Activated CD8-positive, alpha-beta T cell treated with anti-CD3 and anti-CD28 coated beads for 36 hours (primary cell): ENCODE measurements at regions of chr6 and their contacts with region 1.

Region 1: GRCh38 chr6:39166189-39166911 is 51.4 kb upstream of the SAYSD1 start:
- DNase-seq: peak; percentile 90
- ATAC-seq: peak; percentile 97
- H3K4me3 Mint-ChIP-seq: no peak overlapping the region
- H3K27ac Mint-ChIP-seq: no peak overlapping the region
- H3K4me1 Mint-ChIP-seq: peaks cover 8% of the 10 kb centered on the region
- H3K27me3 Mint-ChIP-seq: no peaks in the 10 kb centered on the region
- CTCF ChIP-seq: peak; percentile 91

Region 2: DNA sequence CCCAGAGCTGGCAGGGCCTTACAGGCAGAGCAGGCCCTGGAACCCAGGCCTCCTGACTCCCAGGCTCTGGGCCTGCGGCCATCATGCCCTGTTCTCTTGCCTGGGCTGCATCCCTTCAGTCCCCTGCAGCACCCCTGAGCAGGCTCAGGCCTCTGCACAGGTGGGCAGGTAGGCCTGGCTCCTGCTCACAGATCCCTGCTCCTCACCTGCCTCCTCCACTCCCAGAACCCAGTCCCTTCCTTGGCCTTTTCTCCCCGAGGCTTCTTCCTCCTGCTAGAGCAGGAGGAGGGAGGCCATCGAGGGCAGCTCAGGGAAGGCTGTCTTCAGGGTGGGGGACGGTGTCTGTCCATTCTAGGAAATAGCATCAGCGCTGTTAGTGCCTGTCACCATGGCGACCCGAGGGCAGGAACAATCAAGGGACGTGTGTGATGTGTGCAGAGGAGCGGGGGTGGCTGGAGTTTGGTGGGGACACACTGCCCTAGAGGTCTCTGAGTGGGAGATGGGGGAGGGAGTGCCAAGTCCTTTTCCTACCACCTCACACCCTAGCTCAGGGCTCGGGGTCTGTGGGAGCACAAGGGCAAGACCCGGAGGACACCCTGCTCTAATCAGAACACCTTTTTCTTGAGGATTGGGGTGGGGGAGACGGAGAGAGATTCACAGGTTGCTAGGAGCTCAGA is 91.2 kb before region 1 on chr6:
- CTCF ChIA-PET with region 1: no interaction called
- POLR2A ChIA-PET with region 1: no interaction called
- intact Hi-C with region 1: no loop called
- DNase-seq: no peak
- ATAC-seq: no peak
- H3K4me3 Mint-ChIP-seq: no peak overlapping the region
- H3K27ac Mint-ChIP-seq: no peak overlapping the region
- H3K4me1 Mint-ChIP-seq: peaks cover 9% of the 10 kb centered on the region
- H3K27me3 Mint-ChIP-seq: peaks cover 6% of the 10 kb centered on the region
- CTCF ChIP-seq: no peak

Region 3: DNA sequence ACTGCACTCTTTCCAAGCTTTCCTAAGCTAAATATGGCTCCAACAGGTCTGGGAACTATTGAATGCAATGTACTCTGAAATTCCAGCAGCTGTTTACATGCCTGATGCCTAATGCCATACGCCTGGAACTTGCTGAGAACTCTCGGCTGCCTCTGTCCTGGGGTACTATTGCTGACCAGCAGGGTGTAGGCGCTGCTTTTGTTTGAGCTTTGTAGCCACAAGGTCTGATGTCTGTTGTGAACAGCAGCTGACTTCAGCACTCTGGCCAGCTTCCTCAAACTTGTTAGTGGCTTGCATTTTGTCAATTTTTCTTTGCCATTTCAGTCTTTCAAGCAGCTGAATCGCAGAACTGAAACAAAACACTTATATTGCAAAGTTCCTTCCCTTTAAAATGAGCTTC is 78.0 kb before region 1 on chr6:
- CTCF ChIA-PET with region 1: interaction called, 17 read pairs
- POLR2A ChIA-PET with region 1: no interaction called
- intact Hi-C with region 1: no loop called
- DNase-seq: peak; percentile 61
- ATAC-seq: peak; percentile 38
- H3K4me3 Mint-ChIP-seq: no peak overlapping the region
- H3K27ac Mint-ChIP-seq: no peak overlapping the region
- H3K4me1 Mint-ChIP-seq: peaks cover 21% of the 10 kb centered on the region
- H3K27me3 Mint-ChIP-seq: peaks cover 49% of the 10 kb centered on the region
- CTCF ChIP-seq: no peak

Region 4: GRCh38 chr6:39153766-39154397 is 12.5 kb before region 1 on chr6:
- CTCF ChIA-PET with region 1: interaction called, 25 read pairs
- POLR2A ChIA-PET with region 1: no interaction called
- intact Hi-C with region 1: no loop called
- DNase-seq: peak; percentile 75
- ATAC-seq: peak; percentile 92
- H3K4me3 Mint-ChIP-seq: no peak overlapping the region
- H3K27ac Mint-ChIP-seq: peak overlapping the region; percentile 86
- H3K4me1 Mint-ChIP-seq: peaks cover 58% of the 10 kb centered on the region
- H3K27me3 Mint-ChIP-seq: peaks cover 8% of the 10 kb centered on the region
- CTCF ChIP-seq: no peak

Region 5: GRCh38 chr6:39182604-39183003 is 16.3 kb after region 1 on chr6:
- CTCF ChIA-PET with region 1: interaction called, 15 read pairs
- POLR2A ChIA-PET with region 1: interaction called, 5 read pairs
- intact Hi-C with region 1: no loop called
- DNase-seq: no peak
- ATAC-seq: no peak
- H3K4me3 Mint-ChIP-seq: no peak overlapping the region
- H3K27ac Mint-ChIP-seq: no peak overlapping the region
- H3K4me1 Mint-ChIP-seq: no peaks in the 10 kb centered on the region
- H3K27me3 Mint-ChIP-seq: no peaks in the 10 kb centered on the region
- CTCF ChIP-seq: no peak

Region 6: DNA sequence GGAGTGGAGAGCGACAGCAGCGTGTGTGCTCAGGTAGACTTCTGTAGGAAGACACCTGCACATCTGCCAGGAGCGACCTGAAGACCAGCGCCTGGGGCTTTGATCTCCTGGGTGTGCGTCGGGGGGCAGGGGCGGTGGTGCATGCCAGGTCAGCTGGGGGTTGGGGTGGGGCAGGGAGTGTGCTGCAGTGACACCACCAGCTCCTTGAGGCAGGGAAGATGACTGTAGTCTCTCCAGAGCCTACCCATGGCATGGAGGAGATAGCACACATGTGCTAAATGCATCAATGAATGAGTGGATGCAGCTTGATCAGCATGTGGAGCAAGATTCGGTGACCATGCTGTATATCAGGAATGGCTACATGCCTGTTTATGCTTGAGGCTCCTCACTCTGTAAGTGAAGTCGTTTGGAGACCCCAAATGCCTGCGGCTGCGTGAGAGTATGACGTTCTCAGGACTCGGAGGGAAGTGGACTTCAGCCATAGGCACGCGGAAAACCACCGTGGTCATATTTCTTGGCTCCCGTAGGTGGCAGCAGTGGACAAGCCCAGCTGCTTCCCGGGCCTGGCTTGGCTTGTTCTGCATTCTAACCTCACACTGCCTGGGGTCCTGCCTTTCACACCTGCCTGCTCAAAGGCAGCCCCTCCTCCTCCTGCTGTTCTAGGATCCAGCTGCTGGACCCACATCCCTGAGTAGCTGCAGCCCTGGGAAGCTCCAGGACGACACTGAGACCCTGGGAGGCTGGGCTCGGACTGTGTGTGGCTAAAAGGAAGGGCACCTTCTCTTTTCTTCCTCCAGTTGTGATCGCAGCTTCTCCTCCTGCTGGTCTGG is 195.5 kb after region 1 on chr6:
- CTCF ChIA-PET with region 1: no interaction called
- POLR2A ChIA-PET with region 1: no interaction called
- intact Hi-C with region 1: no loop called
- DNase-seq: peak; percentile 61
- ATAC-seq: peak; percentile 77
- H3K4me3 Mint-ChIP-seq: no peak overlapping the region
- H3K27ac Mint-ChIP-seq: no peak overlapping the region
- H3K4me1 Mint-ChIP-seq: peaks cover 3% of the 10 kb centered on the region
- H3K27me3 Mint-ChIP-seq: peaks cover 2% of the 10 kb centered on the region
- CTCF ChIP-seq: peak; percentile 85